BJ (cell line): ENCODE measurements at regions of chr3 and their contacts with region 1.

Region 1: GRCh38 chr3:183481582-183481981 is 53.2 kb upstream of the MCF2L2 start:
- DNase-seq: no peak
- H3K4me3 ChIP-seq: no peak overlapping the region
- H3K27me3 ChIP-seq: 0 out of 2 replicates have a peak, but pooled peaks cover 2% of the 10 kb centered on the region
- CTCF ChIP-seq: no peak

Region 2: DNA sequence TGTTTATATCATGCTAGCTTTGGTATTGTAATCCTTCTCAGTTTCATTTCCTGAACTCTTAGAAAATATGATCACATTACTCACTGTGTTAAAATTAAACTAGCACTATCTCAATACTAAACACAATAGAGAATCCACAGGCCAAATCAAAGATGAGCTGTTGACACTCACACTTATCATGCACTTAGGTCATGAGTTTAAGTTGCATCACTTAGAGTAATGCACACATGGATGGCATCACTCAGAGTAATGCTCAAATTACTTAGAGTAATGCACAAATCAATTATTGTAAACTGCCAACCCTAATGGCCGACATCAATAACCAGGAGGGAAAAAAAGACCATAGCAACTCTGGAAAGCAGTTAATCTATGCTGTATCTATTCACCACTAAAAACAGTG is 13.2 kb before region 1 on chr3:
- CTCF ChIA-PET with region 1: interaction called, 11 read pairs
- POLR2A ChIA-PET with region 1: no interaction called
- DNase-seq: no peak
- H3K4me3 ChIP-seq: no peak overlapping the region
- H3K27me3 ChIP-seq: peaks cover 3% of the 10 kb centered on the region; the same call in 1 of the 2 replicates
- CTCF ChIP-seq: no peak

Region 3: DNA sequence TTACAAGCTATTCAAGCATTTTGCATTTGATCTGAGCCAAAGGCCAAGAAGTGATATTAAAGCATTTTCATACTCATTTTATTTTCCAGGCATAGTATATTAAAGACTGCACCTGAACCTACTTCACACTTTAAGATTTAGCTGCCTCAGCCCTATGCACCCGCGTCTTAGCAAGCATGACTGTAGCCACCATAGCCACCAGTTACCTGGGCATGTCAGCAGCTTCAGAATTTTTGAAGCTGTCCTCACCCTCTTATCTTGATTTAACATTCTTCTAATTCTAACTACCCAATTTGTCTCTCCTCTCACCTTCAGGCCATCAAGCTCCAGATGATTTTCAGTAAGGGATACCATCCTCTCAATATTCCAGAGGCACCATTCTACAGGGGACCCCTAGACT is 113.1 kb after region 1 on chr3:
- CTCF ChIA-PET with region 1: no interaction called
- POLR2A ChIA-PET with region 1: no interaction called
- DNase-seq: no peak
- H3K4me3 ChIP-seq: no peak overlapping the region
- H3K27me3 ChIP-seq: no peaks in the 10 kb centered on the region
- CTCF ChIP-seq: no peak

Region 4: DNA sequence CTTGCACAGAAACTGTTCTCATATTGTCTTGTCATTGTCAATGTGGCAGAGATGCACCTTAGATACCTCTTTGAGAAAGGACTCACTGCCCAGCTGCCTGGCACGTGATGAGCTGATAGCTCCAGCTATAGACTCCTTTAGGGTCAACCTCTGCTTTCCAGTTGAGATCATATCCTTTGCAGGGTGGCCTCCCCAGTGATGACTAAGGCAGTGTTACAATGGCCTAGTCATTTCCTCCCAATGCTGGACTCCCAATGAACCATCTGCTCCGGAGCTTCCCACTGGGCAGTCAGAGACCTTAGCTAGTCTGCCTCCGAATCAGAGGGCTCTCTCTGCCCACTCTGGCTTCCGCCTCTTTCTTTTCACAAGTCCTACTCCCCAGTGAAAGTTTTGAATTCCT is 977.8 kb after region 1 on chr3:
- CTCF ChIA-PET with region 1: no interaction called
- POLR2A ChIA-PET with region 1: no interaction called
- DNase-seq: no peak
- H3K4me3 ChIP-seq: no peak overlapping the region
- H3K27me3 ChIP-seq: no peaks in the 10 kb centered on the region; the same call in 1 of the 2 replicates
- CTCF ChIP-seq: no peak